B cell (primary cell): ENCODE measurements at regions of chr17 and their contacts with region 1.

Region 1: GRCh38 chr17:9522074-9522473 is 53.5 kb downstream of the STX8 start:
- DNase-seq: peak; percentile 26
- ATAC-seq: no peak
- H3K4me3 ChIP-seq: no peak overlapping the region
- H3K4me3 Mint-ChIP-seq: no peak overlapping the region
- H3K27ac ChIP-seq: no peak overlapping the region
- H3K27ac Mint-ChIP-seq: no peak overlapping the region
- H3K4me1 ChIP-seq: no peaks in the 10 kb centered on the region
- H3K4me1 Mint-ChIP-seq: no peaks in the 10 kb centered on the region
- H3K27me3 ChIP-seq: no peaks in the 10 kb centered on the region
- H3K27me3 Mint-ChIP-seq: no peaks in the 10 kb centered on the region
- CTCF ChIP-seq: no peak

Region 2: GRCh38 chr17:8991514-8992285 is 530.4 kb before region 1 on chr17:
- CTCF ChIA-PET with region 1: no interaction called
- POLR2A ChIA-PET with region 1: no interaction called
- intact Hi-C with region 1: loop called (anchors 5 kb)
- DNase-seq: peak; percentile 68
- ATAC-seq: peak; percentile 63
- H3K4me3 ChIP-seq: no peak overlapping the region
- H3K4me3 Mint-ChIP-seq: no peak overlapping the region
- H3K27ac ChIP-seq: no peak overlapping the region
- H3K27ac Mint-ChIP-seq: no peak overlapping the region
- H3K4me1 ChIP-seq: peaks cover 3 to 5% of the 10 kb centered on the region in 2 donors
- H3K4me1 Mint-ChIP-seq: peaks cover 7% of the 10 kb centered on the region
- H3K27me3 ChIP-seq: peaks cover 0 to 8% (median 2%) of the 10 kb centered on the region in 4 experiments
- H3K27me3 Mint-ChIP-seq: peaks cover 3% of the 10 kb centered on the region
- CTCF ChIP-seq: peak; percentile 80